Mucosa of descending colon (tissue), 3 donors: ENCODE measurements at regions of chr16 and their contacts with region 1.

Region 1: GRCh38 chr16:53041320-53042051 is 11.2 kb downstream of the CHD9NB start:
- DNase-seq: peak in 2 of 3 donors; percentile 59 to 63
- ATAC-seq: peak; percentile 21
- H3K4me3 ChIP-seq: no peak overlapping the region
- H3K4me1 ChIP-seq: peaks cover 34% of the 10 kb centered on the region
- CTCF ChIP-seq: no peak

Region 2: DNA sequence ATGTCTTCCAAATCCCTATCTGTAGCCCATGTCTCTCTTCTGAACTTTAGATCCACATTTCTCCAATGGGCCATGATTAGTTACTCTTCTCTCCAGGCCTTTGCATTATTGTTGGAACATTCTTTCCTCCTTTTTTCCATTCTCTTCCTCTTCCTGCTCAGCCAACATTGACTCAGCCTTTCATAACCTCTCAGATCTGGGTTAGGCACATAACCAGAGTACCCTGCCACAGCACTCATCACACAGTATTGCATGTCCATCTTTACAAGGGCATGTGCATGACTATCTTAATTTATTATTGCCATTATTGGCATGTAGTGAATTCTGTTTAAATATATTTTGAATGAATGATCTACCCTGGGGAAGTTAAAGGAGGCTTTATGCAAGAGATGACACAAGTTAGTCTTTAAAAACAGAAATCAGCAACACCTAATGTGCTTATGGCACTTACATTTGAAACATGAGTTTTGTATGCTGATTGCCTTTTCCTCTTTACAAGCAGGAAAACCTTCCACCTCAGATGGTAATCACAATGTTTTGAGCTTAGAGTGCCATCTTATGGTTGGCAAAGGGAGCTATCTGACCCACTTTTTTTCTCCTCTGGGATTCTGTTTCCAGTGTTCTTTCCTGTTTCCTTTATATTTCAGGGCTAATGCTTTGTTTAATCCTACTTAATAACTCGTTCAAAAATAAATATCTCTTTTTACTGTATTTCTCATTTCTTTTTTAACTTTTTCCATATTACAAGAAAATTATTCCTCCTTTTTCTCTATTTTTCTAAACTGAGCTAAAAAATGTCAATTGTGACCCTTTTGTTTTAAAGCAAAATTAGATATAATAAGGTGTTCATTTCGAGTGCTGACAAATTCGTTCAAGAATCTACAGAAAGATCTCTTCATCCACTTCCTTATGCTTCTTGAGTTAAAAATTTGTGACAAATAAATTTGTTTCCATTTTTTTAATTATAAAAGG is 241.8 kb after region 1 on chr16:
- intact Hi-C with region 1: loop called in 1 of 2 experiments (anchors 10 kb)
- DNase-seq: no peak
- ATAC-seq: peak; percentile 76
- H3K4me3 ChIP-seq: no peak overlapping the region
- H3K4me1 ChIP-seq: peaks cover 4% of the 10 kb centered on the region
- CTCF ChIP-seq: peak; percentile 10